ENCODE measurements at regions of chr3 and their contacts with region 1.

Region 1: GRCh38 chr3:39189959-39190269 is 2.5 kb downstream of the XIRP1 start:
- DNase-seq: no peak
- ATAC-seq: peak; percentile 83
- H3K4me3 ChIP-seq: no peak overlapping the region
- H3K27ac ChIP-seq: no peak overlapping the region
- H3K4me1 ChIP-seq: no peaks in the 10 kb centered on the region
- H3K27me3 ChIP-seq: no peaks in the 10 kb centered on the region
- CTCF ChIP-seq: peak; percentile 78

Region 2: DNA sequence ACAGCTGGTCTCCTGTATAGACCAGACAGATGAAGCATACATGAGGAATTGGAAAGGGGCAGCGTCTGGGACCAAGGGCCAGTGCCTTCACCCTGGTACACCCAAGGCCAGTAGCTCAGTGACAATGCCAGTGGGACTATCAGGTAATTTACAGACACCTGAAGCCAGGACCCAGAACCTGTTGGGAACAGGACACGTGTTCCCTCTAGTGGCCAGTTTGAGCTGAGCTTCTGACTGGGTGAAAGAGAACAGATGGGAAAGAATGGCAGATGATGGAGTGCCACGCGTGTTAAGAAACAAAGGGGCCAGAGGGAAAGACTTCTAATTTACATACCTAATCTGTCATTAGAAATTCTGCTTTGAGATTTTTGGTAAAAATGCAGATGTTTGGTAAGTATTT is 188.2 kb after region 1 on chr3:
- CTCF ChIA-PET with region 1: no interaction called
- POLR2A ChIA-PET with region 1: no interaction called
- in situ Hi-C with region 1: no loop called
- intact Hi-C with region 1: loop called (anchors 10 kb)
- DNase-seq: no peak
- ATAC-seq: peak; percentile 88; the same call in 1 of the 2 replicates
- H3K4me3 ChIP-seq: no peak overlapping the region
- H3K27ac ChIP-seq: no peak overlapping the region
- H3K4me1 ChIP-seq: peaks cover 6% of the 10 kb centered on the region; the same call in 1 of the 2 replicates
- H3K27me3 ChIP-seq: no peaks in the 10 kb centered on the region
- CTCF ChIP-seq: peak; percentile 80